ENCODE measurements at regions of chr12 and their contacts with region 1.

Region 1: DNA sequence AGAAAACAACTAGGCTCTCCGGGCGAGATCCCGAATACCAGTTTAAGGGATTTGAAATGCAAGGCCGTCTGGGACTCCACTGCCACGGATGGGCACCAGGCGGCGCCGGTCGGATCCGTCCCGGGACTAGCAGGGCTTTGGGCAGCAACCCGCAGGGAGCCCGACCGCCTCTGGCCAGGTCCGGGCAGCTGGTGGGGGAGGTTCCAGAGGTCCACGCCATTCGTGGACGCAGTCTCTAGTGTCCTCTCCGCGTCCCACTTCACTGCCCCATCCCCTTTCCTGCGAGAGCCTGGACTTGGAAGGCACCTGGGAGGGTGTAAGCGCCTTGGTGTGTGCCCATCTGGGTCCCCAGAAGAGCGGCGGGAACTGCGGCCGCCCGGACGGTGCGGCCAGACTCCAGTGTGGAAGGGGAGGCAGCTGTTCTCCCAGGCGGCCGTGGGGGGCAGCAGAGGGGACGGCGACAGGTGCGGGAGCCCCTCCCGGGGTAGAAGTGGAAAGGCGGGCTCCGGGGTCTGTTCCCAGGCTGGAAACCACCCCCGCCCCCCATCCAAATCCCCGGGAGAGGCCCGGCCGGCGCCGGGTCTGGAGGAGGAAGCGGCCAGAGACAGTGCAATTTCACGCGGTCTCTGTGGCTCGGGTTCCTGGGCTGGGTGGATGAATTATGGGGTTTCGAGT is 838 bp upstream of the ERBB3 start:
- DNase-seq: peak; percentile 81
- H3K4me3 ChIP-seq: peak overlapping the region; percentile 55 to 82 (median 73)
- H3K27ac ChIP-seq: peak overlapping the region; percentile 65
- H3K4me1 ChIP-seq: peaks cover 16% of the 10 kb centered on the region
- H3K27me3 ChIP-seq: no peaks in the 10 kb centered on the region
- CTCF ChIP-seq: peak; percentile 77 to 92

Region 2: GRCh38 chr12:56053407-56053893 is 25.7 kb before region 1 on chr12:
- CTCF ChIA-PET with region 1: no interaction called
- dilution Hi-C with region 1: no loop called
- in situ Hi-C with region 1: no loop called
- intact Hi-C with region 1: loop called (anchors 2 kb)
- DNase-seq: no peak
- H3K4me3 ChIP-seq: no peak overlapping the region
- H3K27ac ChIP-seq: no peak overlapping the region
- H3K4me1 ChIP-seq: peaks cover 5% of the 10 kb centered on the region
- H3K27me3 ChIP-seq: no peaks in the 10 kb centered on the region
- CTCF ChIP-seq: no peak

Region 3: DNA sequence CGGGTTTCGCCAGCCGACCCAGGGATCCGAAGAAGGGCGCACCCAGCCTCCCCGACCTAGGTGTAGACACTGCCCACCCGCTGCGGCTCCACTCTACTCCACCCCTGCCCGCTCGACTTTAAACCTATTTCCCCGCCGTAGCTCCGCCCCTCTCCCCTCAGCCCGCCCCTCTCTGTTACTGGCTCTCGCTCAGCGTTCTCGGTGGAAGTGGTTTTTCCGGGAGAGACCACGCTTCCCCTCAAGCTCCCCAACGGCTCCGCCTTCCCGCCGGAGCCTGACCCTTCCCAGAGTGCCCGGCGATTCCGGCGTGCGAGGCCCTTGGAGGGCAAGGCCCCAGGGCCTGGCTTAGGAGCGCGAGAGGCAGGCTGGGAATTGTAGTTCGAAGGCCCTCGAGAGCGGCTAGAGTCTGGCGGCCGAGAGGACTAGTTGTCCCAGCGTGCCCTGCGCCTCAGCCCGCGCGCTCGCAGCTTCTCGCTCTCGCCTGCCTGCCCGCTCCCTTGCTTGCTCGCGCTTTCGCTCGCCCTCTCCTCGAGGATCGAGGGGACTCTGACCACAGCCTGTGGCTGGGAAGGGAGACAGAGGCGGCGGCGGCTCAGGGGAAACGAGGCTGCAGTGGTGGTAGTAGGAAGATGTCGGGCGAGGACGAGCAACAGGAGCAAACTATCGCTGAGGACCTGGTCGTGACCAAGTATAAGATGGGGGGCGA is 25.1 kb after region 1 on chr12 and contains the start of gene PA2G4:
- CTCF ChIA-PET with region 1: interaction called, 7 read pairs
- dilution Hi-C with region 1: no loop called
- in situ Hi-C with region 1: no loop called
- intact Hi-C with region 1: loop called (anchors 1 kb)
- DNase-seq: peak; percentile 100
- H3K4me3 ChIP-seq: peak within 1 kb of the TSS; percentile 73 to 89 (median 76)
- H3K27ac ChIP-seq: peak within 1 kb of the TSS; percentile 76
- H3K4me1 ChIP-seq: peaks cover 24% of the 10 kb centered on the region
- H3K27me3 ChIP-seq: no peaks in the 10 kb centered on the region
- CTCF ChIP-seq: no peak
- total RNA-seq, gene PA2G4: 127 to 221 TPM